HepG2 (cell line): ENCODE measurements at regions of chr3 and their contacts with region 1.

Region 1: GRCh38 chr3:30496066-30496966 is 110.1 kb upstream of the TGFBR2 start:
- DNase-seq: no peak
- ATAC-seq: no peak
- H3K4me3 ChIP-seq: no peak overlapping the region
- H3K27ac ChIP-seq: no peak overlapping the region
- H3K4me1 ChIP-seq: peaks cover 97% of the 10 kb centered on the region
- H3K27me3 ChIP-seq: no peaks in the 10 kb centered on the region
- CTCF ChIP-seq: no peak
- EP300 ChIP-seq: no peak
- POLR2A ChIP-seq: no peak
- RAD21 ChIP-seq: no peak

Region 2: GRCh38 chr3:30112902-30113484 is 383.3 kb before region 1 on chr3:
- CTCF ChIA-PET with region 1: no interaction called
- POLR2A ChIA-PET with region 1: no interaction called
- in situ Hi-C with region 1: no loop called
- intact Hi-C with region 1: loop called (anchors 10 kb)
- DNase-seq: peak; percentile 58
- ATAC-seq: peak; percentile 58; the same call in 1 of the 3 replicates
- H3K4me3 ChIP-seq: no peak overlapping the region
- H3K27ac ChIP-seq: no peak overlapping the region
- H3K4me1 ChIP-seq: peaks cover 22% of the 10 kb centered on the region
- H3K27me3 ChIP-seq: no peaks in the 10 kb centered on the region
- CTCF ChIP-seq: peak; percentile 67
- EP300 ChIP-seq: no peak
- POLR2A ChIP-seq: no peak
- RAD21 ChIP-seq: peak; percentile 43; the same call in 1 of the 2 replicates

Region 3: GRCh38 chr3:30241721-30242120 is 254.6 kb before region 1 on chr3:
- CTCF ChIA-PET with region 1: no interaction called
- POLR2A ChIA-PET with region 1: no interaction called
- in situ Hi-C with region 1: no loop called
- intact Hi-C with region 1: loop called (anchors 5 kb)
- DNase-seq: peak; percentile 88
- ATAC-seq: peak; percentile 100
- H3K4me3 ChIP-seq: no peak overlapping the region
- H3K27ac ChIP-seq: peak overlapping the region; percentile 5
- H3K4me1 ChIP-seq: peaks cover 49% of the 10 kb centered on the region
- H3K27me3 ChIP-seq: no peaks in the 10 kb centered on the region
- CTCF ChIP-seq: no peak
- EP300 ChIP-seq: peak in 1 of 2 experiments; percentile 68; a peak in 2 of 4 replicates
- POLR2A ChIP-seq: no peak
- RAD21 ChIP-seq: no peak

Region 4: GRCh38 chr3:30408105-30408557 is 88.2 kb before region 1 on chr3:
- CTCF ChIA-PET with region 1: no interaction called
- POLR2A ChIA-PET with region 1: no interaction called
- in situ Hi-C with region 1: no loop called
- intact Hi-C with region 1: no loop called
- DNase-seq: no peak
- ATAC-seq: no peak
- H3K4me3 ChIP-seq: no peak overlapping the region
- H3K27ac ChIP-seq: no peak overlapping the region
- H3K4me1 ChIP-seq: peaks cover 2% of the 10 kb centered on the region; the same call in 1 of the 2 replicates
- H3K27me3 ChIP-seq: no peaks in the 10 kb centered on the region; a peak in 1 of 5 replicates
- CTCF ChIP-seq: no peak
- EP300 ChIP-seq: no peak
- POLR2A ChIP-seq: no peak
- RAD21 ChIP-seq: no peak

Region 5: GRCh38 chr3:30475038-30475808 is 21.1 kb before region 1 on chr3:
- CTCF ChIA-PET with region 1: no interaction called
- POLR2A ChIA-PET with region 1: interaction called, 4 read pairs
- in situ Hi-C with region 1: no loop called
- intact Hi-C with region 1: loop called (anchors 2 kb)
- DNase-seq: no peak
- ATAC-seq: no peak
- H3K4me3 ChIP-seq: no peak overlapping the region
- H3K27ac ChIP-seq: no peak overlapping the region
- H3K4me1 ChIP-seq: peaks cover 47% of the 10 kb centered on the region
- H3K27me3 ChIP-seq: no peaks in the 10 kb centered on the region
- CTCF ChIP-seq: no peak
- EP300 ChIP-seq: no peak
- POLR2A ChIP-seq: no peak
- RAD21 ChIP-seq: no peak

Region 6: DNA sequence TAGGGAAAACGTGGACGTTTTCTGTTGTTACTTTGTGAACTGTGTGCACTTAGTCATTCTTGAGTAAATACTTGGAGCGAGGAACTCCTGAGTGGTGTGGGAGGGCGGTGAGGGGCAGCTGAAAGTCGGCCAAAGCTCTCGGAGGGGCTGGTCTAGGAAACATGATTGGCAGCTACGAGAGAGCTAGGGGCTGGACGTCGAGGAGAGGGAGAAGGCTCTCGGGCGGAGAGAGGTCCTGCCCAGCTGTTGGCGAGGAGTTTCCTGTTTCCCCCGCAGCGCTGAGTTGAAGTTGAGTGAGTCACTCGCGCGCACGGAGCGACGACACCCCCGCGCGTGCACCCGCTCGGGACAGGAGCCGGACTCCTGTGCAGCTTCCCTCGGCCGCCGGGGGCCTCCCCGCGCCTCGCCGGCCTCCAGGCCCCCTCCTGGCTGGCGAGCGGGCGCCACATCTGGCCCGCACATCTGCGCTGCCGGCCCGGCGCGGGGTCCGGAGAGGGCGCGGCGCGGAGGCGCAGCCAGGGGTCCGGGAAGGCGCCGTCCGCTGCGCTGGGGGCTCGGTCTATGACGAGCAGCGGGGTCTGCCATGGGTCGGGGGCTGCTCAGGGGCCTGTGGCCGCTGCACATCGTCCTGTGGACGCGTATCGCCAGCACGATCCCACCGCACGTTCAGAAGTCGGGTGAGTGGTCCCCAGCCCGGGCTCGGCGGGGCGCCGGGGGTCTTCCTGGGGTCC is 110.2 kb after region 1 on chr3 and contains the start of gene TGFBR2:
- CTCF ChIA-PET with region 1: no interaction called
- POLR2A ChIA-PET with region 1: interaction called, 9 read pairs
- in situ Hi-C with region 1: loop called (anchors 5 kb)
- intact Hi-C with region 1: loop called (anchors 2 kb)
- DNase-seq: peak; percentile 98
- ATAC-seq: peak; percentile 98
- H3K4me3 ChIP-seq: peak within 1 kb of the TSS; percentile 96 to 100 (median 99)
- H3K27ac ChIP-seq: peak within 1 kb of the TSS; percentile 93
- H3K4me1 ChIP-seq: peaks cover 52% of the 10 kb centered on the region
- H3K27me3 ChIP-seq: peaks cover 0 to 2% of the 10 kb centered on the region in 2 experiments; a peak in 1 of 5 replicates
- CTCF ChIP-seq: 0 out of 2 replicates have a peak, but pooled peaks have one; percentile 10
- EP300 ChIP-seq: peak in 1 of 2 experiments; percentile 92; a peak in 2 of 4 replicates
- POLR2A ChIP-seq: peak; percentile 73 to 93
- RAD21 ChIP-seq: peak; percentile 92
- total RNA-seq, gene TGFBR2: 68.1 and 82.2 TPM in 2 replicates